PC-3 (cell line): ENCODE measurements at regions of chr16 and their contacts with region 1.

Region 1: GRCh38 chr16:81035398-81035974 is at the start of gene ATMIN:
- DNase-seq: peak; percentile 90
- ATAC-seq: peak; percentile 94
- H3K4me3 ChIP-seq: peak within 1 kb of the TSS; percentile 94
- H3K27ac ChIP-seq: no peak within 1 kb of the TSS
- H3K4me1 ChIP-seq: peaks cover 9% of the 10 kb centered on the region
- H3K27me3 ChIP-seq: no peaks in the 10 kb centered on the region
- CTCF ChIP-seq: peak; percentile 87
- total RNA-seq, gene ATMIN: 34.7 and 35.4 TPM in 2 replicates

Region 2: GRCh38 chr16:81006814-81007696 is 28.4 kb before region 1 on chr16 and contains the starts of genes CENPN and CMC2:
- CTCF ChIA-PET with region 1: interaction called, 3 read pairs
- POLR2A ChIA-PET with region 1: no interaction called
- intact Hi-C with region 1: loop called (anchors 2 kb)
- DNase-seq: peak; percentile 93
- ATAC-seq: peak; percentile 90
- H3K4me3 ChIP-seq: peak within 1 kb of the TSS; percentile 99
- H3K27ac ChIP-seq: peak within 1 kb of the TSS; percentile 92
- H3K4me1 ChIP-seq: peaks cover 10% of the 10 kb centered on the region; the same call in 1 of the 2 replicates
- H3K27me3 ChIP-seq: no peaks in the 10 kb centered on the region
- CTCF ChIP-seq: no peak
- total RNA-seq, gene CENPN: 60.9 and 63.1 TPM in 2 replicates
- total RNA-seq, gene CMC2: 75.3 and 86.2 TPM in 2 replicates

Region 3: GRCh38 chr16:81077076-81077940 is 41.8 kb after region 1 on chr16 and contains the start of gene C16orf46:
- CTCF ChIA-PET with region 1: interaction called, 3 read pairs
- POLR2A ChIA-PET with region 1: no interaction called
- intact Hi-C with region 1: loop called (anchors 5 kb)
- DNase-seq: peak; percentile 90
- ATAC-seq: peak; percentile 93
- H3K4me3 ChIP-seq: peak within 1 kb of the TSS; percentile 77
- H3K27ac ChIP-seq: peak within 1 kb of the TSS; percentile 41
- H3K4me1 ChIP-seq: peaks cover 6% of the 10 kb centered on the region; the same call in 1 of the 2 replicates
- H3K27me3 ChIP-seq: no peaks in the 10 kb centered on the region
- CTCF ChIP-seq: no peak
- total RNA-seq, gene C16orf46: 0.73 TPM in 1 of 2 replicates, not detected in the other

Region 4: DNA sequence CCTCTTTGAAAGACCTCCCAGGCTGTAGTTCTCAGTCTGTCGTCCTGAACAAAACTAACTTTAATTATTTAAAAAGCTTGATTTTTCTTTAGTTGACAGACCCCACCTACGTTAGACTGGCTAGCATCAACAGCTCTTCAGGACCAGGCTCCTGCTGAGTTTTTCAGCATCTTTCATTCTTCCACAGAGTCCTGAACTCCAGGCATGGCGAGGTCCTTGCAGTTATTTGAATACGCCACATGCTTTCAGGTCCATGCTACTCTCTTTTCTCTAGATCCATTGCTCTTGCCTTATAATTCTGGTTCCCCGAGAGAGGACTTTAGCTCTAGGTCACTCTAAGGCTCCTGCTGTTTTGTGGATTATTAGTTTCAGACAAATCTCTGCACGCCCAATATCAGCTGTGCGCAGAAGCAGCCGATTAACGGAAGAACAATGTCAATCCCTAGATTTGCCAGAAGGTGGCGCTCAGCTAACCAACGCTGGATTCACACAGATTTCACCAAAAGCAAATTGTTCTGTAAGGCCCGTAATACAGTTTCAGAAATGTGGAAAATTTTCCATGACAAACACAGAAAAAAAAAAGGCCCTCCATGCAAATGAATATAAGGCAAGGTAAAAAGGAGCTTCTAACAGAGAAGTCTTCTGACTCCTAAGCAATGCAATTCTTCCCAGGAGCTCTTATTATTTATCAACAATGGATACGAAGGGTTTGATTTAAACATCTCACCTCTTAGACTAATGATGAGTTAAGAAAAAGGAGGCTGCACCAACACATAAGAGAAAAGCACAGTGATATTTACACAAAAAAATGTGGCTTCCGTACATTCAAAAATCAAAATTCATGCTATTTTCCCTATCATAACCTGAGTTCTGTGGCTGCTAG is 169.6 kb after region 1 on chr16:
- CTCF ChIA-PET with region 1: interaction called, 3 read pairs
- POLR2A ChIA-PET with region 1: no interaction called
- intact Hi-C with region 1: loop called (anchors 10 kb)
- DNase-seq: peak; percentile 59
- ATAC-seq: 0 out of 2 replicates have a peak, but pooled peaks have one; percentile 16
- H3K4me3 ChIP-seq: no peak overlapping the region
- H3K27ac ChIP-seq: no peak overlapping the region
- H3K4me1 ChIP-seq: peaks cover 6% of the 10 kb centered on the region; the same call in 1 of the 2 replicates
- H3K27me3 ChIP-seq: no peaks in the 10 kb centered on the region
- CTCF ChIP-seq: peak; percentile 71

Region 5: GRCh38 chr16:81216706-81217105 is 181.2 kb after region 1 on chr16:
- CTCF ChIA-PET with region 1: no interaction called
- POLR2A ChIA-PET with region 1: interaction called, 21 read pairs
- intact Hi-C with region 1: no loop called
- DNase-seq: no peak
- ATAC-seq: no peak
- H3K4me3 ChIP-seq: no peak overlapping the region
- H3K27ac ChIP-seq: no peak overlapping the region
- H3K4me1 ChIP-seq: no peaks in the 10 kb centered on the region
- H3K27me3 ChIP-seq: no peaks in the 10 kb centered on the region
- CTCF ChIP-seq: no peak

Region 6: GRCh38 chr16:81737885-81738786 is 702.6 kb after region 1 on chr16:
- CTCF ChIA-PET with region 1: no interaction called
- POLR2A ChIA-PET with region 1: no interaction called
- intact Hi-C with region 1: loop called (anchors 5 kb)
- DNase-seq: peak; percentile 86
- ATAC-seq: peak; percentile 96
- H3K4me3 ChIP-seq: peak overlapping the region; percentile 54; the same call in 1 of the 2 replicates
- H3K27ac ChIP-seq: no peak overlapping the region
- H3K4me1 ChIP-seq: peaks cover 5% of the 10 kb centered on the region; the same call in 1 of the 2 replicates
- H3K27me3 ChIP-seq: no peaks in the 10 kb centered on the region
- CTCF ChIP-seq: peak; percentile 78